Right ventricle myocardium inferior (tissue), 1 donor: ENCODE measurements at regions of chr4 and their contacts with region 1.

Region 1: GRCh38 chr4:7518871-7519637 is 84.3 kb upstream of the PSAPL1 start:
- DNase-seq: no peak
- ATAC-seq: peak; percentile 87

Region 2: GRCh38 chr4:7630568-7631287 is 111.7 kb after region 1 on chr4:
- intact Hi-C with region 1: loop called (anchors 5 kb)
- DNase-seq: no peak
- ATAC-seq: peak; percentile 80